GM18951 (cell line): ENCODE measurements at regions of chr20 and their contacts with region 1.

Region 1: DNA sequence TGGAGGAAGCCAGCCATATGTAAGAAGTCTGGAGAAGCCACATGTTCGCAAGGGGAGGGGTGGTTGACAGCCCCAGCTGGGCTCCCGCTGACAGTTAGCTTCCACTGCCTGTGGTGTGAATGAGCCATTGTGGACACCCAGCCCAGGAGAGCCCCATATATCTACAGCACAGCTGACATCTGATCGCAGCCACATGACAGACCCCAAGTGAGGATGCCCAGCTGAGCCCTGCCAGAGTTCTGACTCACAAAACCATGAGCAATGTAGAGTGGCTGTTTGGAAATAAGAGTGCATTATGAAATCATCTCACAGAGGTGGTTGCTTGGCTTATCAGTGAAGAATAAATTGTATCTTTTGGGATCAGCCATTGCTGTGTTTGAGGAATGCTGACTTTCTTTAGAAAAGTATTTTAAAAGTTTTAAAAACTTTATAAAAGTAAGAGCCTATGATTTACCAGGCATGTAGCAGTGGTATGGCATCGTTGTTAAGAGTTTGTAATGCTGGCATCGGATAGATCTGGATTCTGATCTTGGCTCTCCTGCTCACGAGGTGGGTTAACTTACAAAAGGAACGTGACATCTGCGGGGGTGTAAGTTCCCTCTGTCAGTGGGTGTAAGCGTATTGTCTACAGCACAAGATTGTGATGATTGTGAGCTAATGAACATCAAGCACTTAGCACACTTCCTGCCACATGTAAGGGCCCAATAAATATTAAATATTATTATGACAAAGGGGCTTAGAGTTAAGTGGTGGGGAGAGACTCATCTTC is 24.1 kb downstream of the CFAP61 start:
- POLR2A ChIP-seq: no peak

Region 2: GRCh38 chr20:19308146-19308545 is 768.3 kb before region 1 on chr20:
- in situ Hi-C with region 1: no loop called
- POLR2A ChIP-seq: no peak

Region 3: GRCh38 chr20:20582734-20583133 is 506.3 kb after region 1 on chr20:
- in situ Hi-C with region 1: loop called (anchors 10 kb)
- POLR2A ChIP-seq: no peak